ENCODE measurements at regions of chr1 and their contacts with region 1.

Region 1: DNA sequence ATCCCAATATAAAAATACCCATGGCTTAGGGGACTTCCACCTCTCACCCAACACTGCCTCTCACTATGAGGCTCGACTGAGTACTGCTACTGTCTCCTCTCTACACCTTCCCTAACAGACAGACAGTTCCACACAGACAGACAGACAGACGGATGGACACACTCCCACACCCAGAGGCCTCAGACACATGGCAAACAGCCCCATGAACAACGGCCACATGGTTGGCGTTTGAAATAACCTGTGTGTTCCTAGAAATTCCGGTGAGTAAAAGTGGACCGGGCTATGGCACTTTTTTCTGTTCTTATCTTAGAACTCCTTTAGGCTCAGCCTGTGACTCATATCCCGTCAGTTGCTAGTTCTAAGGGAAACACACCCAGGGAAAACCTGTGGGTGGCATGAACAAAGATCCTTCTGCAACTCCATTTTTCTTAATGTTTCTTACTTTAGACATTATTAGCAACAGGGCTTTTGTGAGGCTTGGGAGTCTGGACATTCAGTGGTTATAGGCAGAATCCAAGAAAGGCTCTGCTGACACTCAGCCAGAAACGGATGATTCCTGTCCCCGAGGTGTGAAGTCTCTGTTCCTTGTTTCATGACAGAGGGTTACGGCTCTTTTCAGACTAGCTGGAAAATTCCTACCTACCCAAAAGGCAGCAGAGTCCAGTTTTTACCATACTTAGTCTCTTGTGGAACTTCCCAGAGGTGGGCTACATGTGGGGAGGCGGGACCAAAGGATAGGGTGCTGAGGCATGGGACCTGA is 90.5 kb upstream of the TLR5 start:
- DNase-seq: peak; percentile 16
- ATAC-seq: peak; percentile 38
- H3K4me3 Mint-ChIP-seq: no peak overlapping the region
- H3K27ac Mint-ChIP-seq: no peak overlapping the region
- H3K4me1 Mint-ChIP-seq: peaks cover 56% of the 10 kb centered on the region
- H3K27me3 Mint-ChIP-seq: no peaks in the 10 kb centered on the region
- CTCF ChIP-seq: no peak

Region 2: DNA sequence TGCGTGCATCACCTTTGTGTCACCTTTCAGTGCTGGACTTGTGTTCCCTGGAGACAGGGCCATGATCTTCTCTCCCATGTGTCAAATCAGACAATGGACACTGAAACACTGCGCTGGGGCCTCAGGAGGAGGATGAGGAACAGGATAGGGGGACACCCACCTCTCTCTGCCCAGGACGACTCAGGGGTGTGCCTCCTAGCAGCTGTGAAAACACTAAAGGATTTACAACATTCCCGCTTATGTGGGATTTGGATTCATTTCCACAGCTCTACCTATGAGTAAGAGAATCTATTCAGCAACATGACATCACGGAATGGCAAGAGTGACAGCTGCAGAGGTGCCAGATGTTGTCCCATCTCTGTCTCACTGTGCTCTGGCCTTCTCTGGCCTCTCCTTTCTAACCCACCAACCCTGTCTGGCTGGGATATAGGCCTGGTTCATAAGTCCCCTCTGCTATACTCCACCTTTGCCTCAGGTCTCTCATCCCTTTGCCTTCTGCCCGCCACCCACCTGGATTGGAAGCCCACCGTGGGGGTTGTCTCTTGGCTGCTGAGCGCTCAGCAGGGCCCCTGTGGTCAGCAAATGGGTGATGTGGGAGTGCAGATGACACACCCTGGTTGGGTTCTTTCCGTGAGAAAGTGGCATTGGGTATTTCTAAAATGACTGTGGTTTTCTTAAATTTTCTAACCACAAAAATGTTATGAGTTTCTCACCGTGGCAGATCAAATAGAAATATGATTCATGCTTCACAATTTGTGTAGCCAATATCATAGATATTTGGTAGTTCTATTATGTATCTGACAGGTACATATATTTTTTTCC is 43.5 kb before region 1 on chr1:
- CTCF ChIA-PET with region 1: no interaction called
- POLR2A ChIA-PET with region 1: interaction called, 4 read pairs
- intact Hi-C with region 1: loop called (anchors 5 kb)
- DNase-seq: peak; percentile 84
- ATAC-seq: peak; percentile 89
- H3K4me3 Mint-ChIP-seq: peak overlapping the region; percentile 48
- H3K27ac Mint-ChIP-seq: peak overlapping the region; percentile 96
- H3K4me1 Mint-ChIP-seq: peaks cover 40% of the 10 kb centered on the region
- H3K27me3 Mint-ChIP-seq: peaks cover 4% of the 10 kb centered on the region
- CTCF ChIP-seq: no peak